ENCODE measurements at regions of chr6 and their contacts with region 1.

Region 1: GRCh38 chr6:150016324-150017185 is 8.8 kb downstream of the RAET1L start:
- DNase-seq: peak; percentile 50 to 53
- ATAC-seq: peak; percentile 69 to 86; a peak in 5 of 6 replicates
- H3K4me3 ChIP-seq: no peak overlapping the region
- H3K27ac ChIP-seq: no peak overlapping the region
- H3K4me1 ChIP-seq: no peaks in the 10 kb centered on the region
- CTCF ChIP-seq: peak; percentile 54
- EP300 ChIP-seq: no peak
- POLR2A ChIP-seq: no peak
- RAD21 ChIP-seq: peak; percentile 72 to 74

Region 2: DNA sequence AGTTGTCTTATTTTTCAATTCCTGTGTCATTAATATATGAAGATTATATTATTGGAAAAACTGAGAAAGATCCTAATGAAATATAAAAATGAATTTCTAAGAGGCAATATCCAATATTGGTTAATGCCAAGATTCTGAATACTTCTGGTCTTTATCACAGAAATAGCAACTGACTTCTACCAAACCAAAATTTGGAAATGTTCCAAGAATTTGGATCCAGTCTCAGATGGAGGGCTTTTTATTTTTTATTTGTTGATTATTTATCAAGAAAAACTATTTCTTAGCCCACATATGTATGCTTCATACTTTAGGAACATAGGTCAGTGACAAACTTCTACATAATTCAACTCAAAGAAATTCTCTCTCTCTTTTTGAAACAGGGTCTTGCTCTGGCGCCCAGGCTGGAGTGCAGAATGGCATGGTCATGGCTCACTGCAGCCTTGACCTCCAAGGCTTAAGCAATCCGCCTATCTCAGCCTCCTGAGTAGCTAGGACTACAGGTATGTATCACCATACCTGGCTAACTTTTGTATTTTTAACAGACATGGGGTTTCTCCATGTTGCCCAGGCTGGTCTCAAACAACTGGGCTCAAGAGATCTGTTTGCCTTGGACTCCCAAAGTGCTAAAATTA is 283.4 kb before region 1 on chr6:
- CTCF ChIA-PET with region 1: no interaction called
- POLR2A ChIA-PET with region 1: no interaction called
- DNase-seq: no peak
- ATAC-seq: no peak
- H3K4me3 ChIP-seq: no peak overlapping the region
- H3K27ac ChIP-seq: no peak overlapping the region
- H3K4me1 ChIP-seq: no peaks in the 10 kb centered on the region
- CTCF ChIP-seq: no peak
- EP300 ChIP-seq: no peak
- POLR2A ChIP-seq: no peak
- RAD21 ChIP-seq: no peak

Region 3: DNA sequence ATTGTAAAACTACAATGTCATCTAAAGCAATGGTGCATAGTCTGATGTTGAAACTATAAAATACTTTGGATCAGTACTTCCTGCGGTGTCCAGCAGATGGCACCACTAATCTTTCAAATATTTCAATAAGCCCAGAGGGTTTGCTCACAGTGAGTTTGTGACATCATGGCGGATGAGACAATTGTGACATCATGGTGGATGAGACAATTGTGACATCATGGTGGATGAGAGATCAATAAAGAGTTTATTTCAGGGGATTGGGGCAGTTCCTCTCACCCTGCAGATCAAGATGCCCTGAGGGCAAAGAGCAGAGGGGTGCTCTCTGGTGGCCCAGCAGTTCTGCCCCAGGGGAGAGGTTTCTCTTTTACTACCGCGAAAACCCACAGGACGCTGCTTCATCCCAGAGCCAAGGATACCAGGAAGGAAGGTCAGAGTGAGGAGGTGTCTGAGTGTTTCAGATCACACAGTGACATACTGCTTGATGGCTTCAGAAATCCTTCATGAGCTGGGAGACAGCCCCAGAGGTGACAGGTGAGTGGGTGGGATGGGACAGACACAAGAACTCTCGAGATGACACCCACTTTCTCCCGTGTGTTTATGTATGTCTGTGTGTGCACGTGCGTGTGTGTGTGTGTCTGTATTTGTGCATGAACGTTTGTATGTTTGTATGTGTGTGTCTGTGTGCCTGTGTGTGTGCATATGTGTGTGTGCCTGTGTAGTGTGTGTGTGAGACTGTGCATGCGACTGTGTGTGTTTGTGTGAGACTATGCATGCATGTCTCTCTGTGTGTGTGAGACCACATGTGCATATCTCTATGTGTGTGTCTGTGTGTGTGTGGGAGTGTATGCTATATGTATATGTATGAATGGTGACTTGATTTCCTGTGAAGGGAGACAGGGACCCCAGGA is 82.1 kb before region 1 on chr6:
- CTCF ChIA-PET with region 1: interaction called, 11 read pairs
- POLR2A ChIA-PET with region 1: no interaction called
- DNase-seq: peak; percentile 33 to 65
- ATAC-seq: peak; percentile 58 to 65; a peak in 5 of 6 replicates
- H3K4me3 ChIP-seq: no peak overlapping the region
- H3K27ac ChIP-seq: no peak overlapping the region
- H3K4me1 ChIP-seq: peaks cover 4% of the 10 kb centered on the region; the same call in 1 of the 3 replicates
- CTCF ChIP-seq: peak; percentile 75
- EP300 ChIP-seq: no peak
- POLR2A ChIP-seq: no peak
- RAD21 ChIP-seq: peak; percentile 71 to 77

Region 4: DNA sequence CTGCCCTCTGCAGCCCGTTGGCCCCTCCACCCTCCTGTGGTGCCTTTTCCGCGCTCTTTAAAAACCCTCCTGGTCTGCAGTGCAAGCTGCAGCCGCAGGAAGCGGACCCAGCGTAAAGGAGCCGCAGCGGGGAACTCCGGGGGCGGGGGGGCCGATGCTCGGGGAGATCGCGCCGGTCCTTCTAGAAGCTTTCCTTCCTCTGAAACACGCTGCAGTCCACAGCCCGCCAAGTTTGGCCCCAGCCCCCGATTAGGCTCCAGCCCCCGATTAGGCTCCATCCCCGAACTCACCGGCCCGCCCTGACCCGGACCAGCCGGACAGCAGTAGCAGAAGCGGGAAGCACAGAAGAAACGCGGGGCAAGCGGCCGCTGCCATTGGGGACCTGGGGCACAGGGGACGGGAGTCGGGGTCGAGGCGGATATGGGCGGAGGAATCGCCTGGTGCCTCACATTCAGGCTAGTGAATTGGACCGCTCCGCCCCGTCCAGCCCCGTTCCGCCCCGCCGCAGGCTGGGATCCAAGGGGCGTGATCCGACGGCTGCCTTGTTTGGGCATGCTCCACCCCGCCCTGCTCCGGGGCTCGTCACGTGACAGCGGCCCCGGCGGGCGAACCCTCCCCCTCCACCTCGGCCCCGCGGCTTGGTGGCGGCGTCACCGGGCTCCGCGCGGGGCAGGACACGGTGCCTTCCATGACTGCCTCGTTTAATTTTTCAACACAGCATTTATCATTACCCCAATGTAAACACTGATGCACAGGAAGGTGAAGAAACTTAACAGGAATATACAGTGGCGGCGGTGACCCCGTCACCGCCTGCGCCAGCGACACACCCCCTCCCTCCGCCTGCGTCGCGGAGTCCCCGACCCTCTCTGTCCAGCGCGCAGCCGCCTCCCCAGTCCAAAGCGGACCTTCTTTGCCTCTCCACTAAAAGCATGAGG is 11.5 kb before region 1 on chr6:
- CTCF ChIA-PET with region 1: interaction called, 24 read pairs
- POLR2A ChIA-PET with region 1: no interaction called
- DNase-seq: peak; percentile 87 to 90
- ATAC-seq: peak; percentile 90 to 96
- H3K4me3 ChIP-seq: peak overlapping the region; percentile 80
- H3K27ac ChIP-seq: peak overlapping the region; percentile 77 to 94
- H3K4me1 ChIP-seq: peaks cover 11% of the 10 kb centered on the region; the same call in 2 of the 3 replicates
- CTCF ChIP-seq: no peak
- EP300 ChIP-seq: no peak
- POLR2A ChIP-seq: peak; percentile 49
- RAD21 ChIP-seq: no peak